ENCODE measurements at regions of chr20 and their contacts with region 1.

Region 1: DNA sequence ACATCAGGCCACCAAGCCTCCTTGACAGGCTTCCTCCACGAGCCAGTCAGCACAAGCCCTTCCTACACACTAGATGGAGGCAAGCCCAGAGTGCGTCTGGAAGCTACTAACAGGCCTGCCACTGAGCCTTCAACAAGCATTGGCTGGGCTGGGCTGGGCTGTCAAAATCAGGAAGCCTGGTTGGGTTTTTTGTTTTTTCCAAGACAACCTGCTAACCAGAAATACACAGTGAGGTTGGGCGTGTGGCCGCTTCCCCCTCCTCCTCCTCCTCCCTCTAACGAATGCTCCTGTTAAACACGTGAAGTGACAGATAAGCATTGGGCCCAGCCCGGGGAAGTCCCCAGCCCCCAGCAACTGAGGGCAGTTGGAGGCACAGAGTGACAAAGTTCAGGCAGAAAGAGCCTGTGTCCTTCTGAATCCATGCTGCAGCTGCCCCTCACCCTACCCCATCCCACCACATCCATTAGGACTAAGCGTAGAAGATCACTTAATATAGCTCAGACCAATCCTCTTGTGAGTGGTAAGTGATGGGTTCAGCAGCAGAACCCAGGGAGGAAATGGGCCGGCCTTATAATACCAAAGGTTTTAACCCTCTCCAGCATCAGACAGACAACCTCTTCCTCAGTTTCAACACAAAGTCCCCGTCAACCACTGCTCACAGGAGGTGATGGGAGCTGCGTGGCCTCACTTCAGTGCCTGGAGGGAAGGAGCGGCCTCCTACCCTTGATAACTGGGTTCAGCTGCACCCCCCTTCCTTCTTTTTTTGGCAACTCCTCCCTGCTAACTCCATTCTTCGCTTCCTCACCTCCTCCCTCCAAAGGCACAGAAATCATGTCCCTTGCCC is 1.1 kb downstream of the NFATC2 start:
- DNase-seq: peak; percentile 54
- ATAC-seq: peak; percentile 63
- H3K4me3 Mint-ChIP-seq: peak overlapping the region; percentile 98
- H3K27ac Mint-ChIP-seq: peak overlapping the region; percentile 98
- H3K4me1 Mint-ChIP-seq: peaks cover 55% of the 10 kb centered on the region
- H3K27me3 Mint-ChIP-seq: no peaks in the 10 kb centered on the region
- CTCF ChIP-seq: no peak

Region 2: DNA sequence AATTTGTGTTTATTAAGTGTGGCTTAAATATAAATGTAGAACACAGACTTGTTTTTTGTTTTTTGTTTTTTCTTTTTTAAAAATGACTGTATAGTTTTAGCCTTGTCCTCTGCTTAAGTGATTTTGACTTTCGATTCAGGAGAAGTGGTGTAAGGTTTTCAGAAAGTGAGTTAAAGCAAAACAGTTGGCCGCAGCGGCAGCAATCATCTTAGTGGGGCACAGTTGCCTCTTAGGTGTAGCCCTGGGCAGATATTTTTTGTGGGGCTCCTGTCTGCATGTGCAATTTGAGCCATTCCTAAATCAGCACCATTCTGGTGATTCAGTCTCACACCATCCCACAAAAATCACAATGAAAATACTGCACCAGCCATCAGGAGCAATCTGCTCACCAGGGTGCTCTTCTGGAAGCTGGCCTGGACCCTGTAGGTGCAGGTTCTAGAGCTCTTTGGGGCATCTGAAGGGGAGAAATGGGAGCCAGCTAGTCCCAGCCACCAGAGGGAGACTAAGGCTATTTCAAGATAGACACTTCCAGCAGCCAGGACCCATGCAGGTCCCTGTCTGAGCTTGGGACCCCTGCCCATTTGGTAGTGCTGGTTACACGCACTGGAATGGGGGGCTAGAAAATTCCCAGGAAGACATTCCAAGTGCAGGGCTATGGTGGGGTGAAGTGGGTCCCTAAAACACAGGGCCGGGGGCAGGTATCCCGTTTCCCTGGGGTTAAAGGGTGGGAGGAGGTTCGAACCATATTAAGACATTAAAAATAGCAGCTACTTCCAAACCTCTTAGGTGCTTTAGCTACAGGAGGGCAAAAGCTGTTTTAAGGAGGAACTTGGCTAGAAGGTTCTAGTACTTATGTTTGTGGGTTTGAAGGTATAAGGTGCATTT is 155.5 kb before region 1 on chr20:
- CTCF ChIA-PET with region 1: interaction called, 25 read pairs
- POLR2A ChIA-PET with region 1: interaction called, 16 read pairs
- intact Hi-C with region 1: loop called (anchors 1 kb)
- DNase-seq: no peak
- ATAC-seq: peak; percentile 65
- H3K4me3 Mint-ChIP-seq: no peak overlapping the region
- H3K27ac Mint-ChIP-seq: peak overlapping the region; percentile 62
- H3K4me1 Mint-ChIP-seq: peaks cover 42% of the 10 kb centered on the region
- H3K27me3 Mint-ChIP-seq: no peaks in the 10 kb centered on the region
- CTCF ChIP-seq: no peak

Region 3: GRCh38 chr20:51412991-51413481 is 128.4 kb before region 1 on chr20:
- CTCF ChIA-PET with region 1: interaction called, 5 read pairs
- POLR2A ChIA-PET with region 1: interaction called, 12 read pairs
- intact Hi-C with region 1: no loop called
- DNase-seq: no peak
- ATAC-seq: no peak
- H3K4me3 Mint-ChIP-seq: no peak overlapping the region
- H3K27ac Mint-ChIP-seq: peak overlapping the region; percentile 61
- H3K4me1 Mint-ChIP-seq: peaks cover 78% of the 10 kb centered on the region
- H3K27me3 Mint-ChIP-seq: no peaks in the 10 kb centered on the region
- CTCF ChIP-seq: no peak

Region 4: DNA sequence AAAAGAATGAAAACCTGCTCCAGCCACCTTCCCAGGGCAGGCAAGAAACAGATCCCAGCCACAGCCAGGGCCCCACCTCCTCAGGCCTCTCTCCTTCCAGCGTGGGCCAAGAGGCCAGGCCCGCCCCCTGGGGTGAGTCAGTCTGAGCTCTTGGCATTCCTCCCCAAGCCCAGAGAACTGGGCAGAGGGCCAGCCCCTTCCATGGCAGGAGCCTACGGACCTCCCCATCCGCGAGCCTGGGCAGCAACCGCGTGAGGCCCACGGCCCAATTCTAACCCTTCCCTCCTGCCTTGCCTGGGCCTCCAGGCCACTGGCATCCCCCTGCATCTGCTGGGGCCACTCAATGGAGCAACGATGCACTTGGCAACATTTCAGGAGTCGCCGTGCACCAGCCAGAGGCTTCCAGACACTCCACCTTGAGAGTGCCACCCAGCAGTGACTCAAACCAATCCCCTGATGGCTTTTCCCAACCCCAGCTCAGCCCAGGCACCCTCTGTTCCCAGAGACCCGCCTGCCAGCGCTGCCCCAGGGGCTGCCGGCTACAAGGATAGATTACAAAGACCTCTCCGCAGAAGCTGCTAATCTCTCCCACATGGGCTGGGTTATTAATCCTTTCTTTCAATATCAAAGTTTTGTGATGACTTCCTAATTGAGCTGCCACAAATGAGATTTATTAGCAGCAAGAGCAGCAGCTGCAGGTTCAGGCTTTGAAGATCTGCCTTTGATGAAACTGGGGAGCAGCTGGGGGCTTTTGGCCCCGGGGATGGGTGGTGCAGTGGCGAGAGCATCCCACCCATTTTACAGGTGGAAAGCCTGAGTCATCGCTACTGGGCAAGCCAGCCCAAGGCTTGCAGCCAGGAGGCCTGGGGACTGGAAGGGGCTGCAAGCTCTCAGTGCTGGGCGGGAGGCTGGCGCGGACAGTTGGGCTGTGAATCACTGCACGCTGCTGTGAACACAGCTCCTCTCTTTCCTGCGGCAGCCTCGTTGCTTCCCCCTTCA is 84.6 kb before region 1 on chr20:
- CTCF ChIA-PET with region 1: interaction called, 11 read pairs
- POLR2A ChIA-PET with region 1: interaction called, 38 read pairs
- intact Hi-C with region 1: loop called (anchors 1 kb)
- DNase-seq: peak; percentile 36
- ATAC-seq: peak; percentile 43
- H3K4me3 Mint-ChIP-seq: peak overlapping the region; percentile 59
- H3K27ac Mint-ChIP-seq: peak overlapping the region; percentile 79
- H3K4me1 Mint-ChIP-seq: peaks cover 64% of the 10 kb centered on the region
- H3K27me3 Mint-ChIP-seq: no peaks in the 10 kb centered on the region
- CTCF ChIP-seq: no peak

Region 5: GRCh38 chr20:51525241-51526129 is 15.9 kb before region 1 on chr20:
- CTCF ChIA-PET with region 1: interaction called, 5 read pairs
- POLR2A ChIA-PET with region 1: interaction called, 35 read pairs
- intact Hi-C with region 1: loop called (anchors 1 kb)
- DNase-seq: peak; percentile 31
- ATAC-seq: peak; percentile 53
- H3K4me3 Mint-ChIP-seq: peak overlapping the region; percentile 58
- H3K27ac Mint-ChIP-seq: peak overlapping the region; percentile 82
- H3K4me1 Mint-ChIP-seq: peaks cover 77% of the 10 kb centered on the region
- H3K27me3 Mint-ChIP-seq: no peaks in the 10 kb centered on the region
- CTCF ChIP-seq: no peak

Region 6: GRCh38 chr20:51562332-51563155 is 21.1 kb after region 1 on chr20:
- CTCF ChIA-PET with region 1: no interaction called
- POLR2A ChIA-PET with region 1: interaction called, 5 read pairs
- intact Hi-C with region 1: loop called (anchors 2 kb)
- DNase-seq: peak; percentile 28
- ATAC-seq: peak; percentile 25
- H3K4me3 Mint-ChIP-seq: peak overlapping the region; percentile 67
- H3K27ac Mint-ChIP-seq: no peak overlapping the region
- H3K4me1 Mint-ChIP-seq: peaks cover 26% of the 10 kb centered on the region
- H3K27me3 Mint-ChIP-seq: peaks cover 56% of the 10 kb centered on the region
- CTCF ChIP-seq: no peak

Region 7: DNA sequence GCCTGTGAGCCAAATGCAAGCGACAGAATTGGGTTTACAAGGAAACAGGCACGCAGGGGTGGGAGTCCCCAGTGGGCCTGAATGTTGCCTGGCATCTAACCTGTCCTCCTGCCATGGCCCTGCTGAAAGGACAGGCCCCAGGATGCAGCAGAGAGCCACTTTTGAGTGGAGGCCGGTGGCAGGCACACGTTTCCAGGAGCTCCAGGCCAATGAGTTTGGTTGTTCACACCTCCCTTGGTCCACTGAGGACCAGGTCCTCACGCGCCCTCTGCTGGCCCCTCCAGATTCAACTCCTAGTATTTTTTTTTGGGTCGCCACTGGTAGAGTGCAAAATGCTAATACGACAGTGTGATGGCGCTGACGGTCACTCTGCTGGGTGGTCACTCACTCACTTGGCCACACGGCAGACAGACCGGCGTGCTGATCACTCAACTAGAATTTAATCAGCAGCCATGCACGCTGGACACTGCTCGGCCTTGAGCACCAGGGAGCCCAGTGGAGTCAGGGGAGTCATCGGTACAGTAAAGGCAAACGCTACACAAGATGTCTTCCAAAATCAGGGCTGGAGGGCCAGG is 82.8 kb after region 1 on chr20:
- CTCF ChIA-PET with region 1: no interaction called
- POLR2A ChIA-PET with region 1: no interaction called
- intact Hi-C with region 1: no loop called
- DNase-seq: peak; percentile 55
- ATAC-seq: peak; percentile 64
- H3K4me3 Mint-ChIP-seq: no peak overlapping the region
- H3K27ac Mint-ChIP-seq: no peak overlapping the region
- H3K4me1 Mint-ChIP-seq: peaks cover 2% of the 10 kb centered on the region
- H3K27me3 Mint-ChIP-seq: peaks cover 18% of the 10 kb centered on the region
- CTCF ChIP-seq: no peak

Region 8: DNA sequence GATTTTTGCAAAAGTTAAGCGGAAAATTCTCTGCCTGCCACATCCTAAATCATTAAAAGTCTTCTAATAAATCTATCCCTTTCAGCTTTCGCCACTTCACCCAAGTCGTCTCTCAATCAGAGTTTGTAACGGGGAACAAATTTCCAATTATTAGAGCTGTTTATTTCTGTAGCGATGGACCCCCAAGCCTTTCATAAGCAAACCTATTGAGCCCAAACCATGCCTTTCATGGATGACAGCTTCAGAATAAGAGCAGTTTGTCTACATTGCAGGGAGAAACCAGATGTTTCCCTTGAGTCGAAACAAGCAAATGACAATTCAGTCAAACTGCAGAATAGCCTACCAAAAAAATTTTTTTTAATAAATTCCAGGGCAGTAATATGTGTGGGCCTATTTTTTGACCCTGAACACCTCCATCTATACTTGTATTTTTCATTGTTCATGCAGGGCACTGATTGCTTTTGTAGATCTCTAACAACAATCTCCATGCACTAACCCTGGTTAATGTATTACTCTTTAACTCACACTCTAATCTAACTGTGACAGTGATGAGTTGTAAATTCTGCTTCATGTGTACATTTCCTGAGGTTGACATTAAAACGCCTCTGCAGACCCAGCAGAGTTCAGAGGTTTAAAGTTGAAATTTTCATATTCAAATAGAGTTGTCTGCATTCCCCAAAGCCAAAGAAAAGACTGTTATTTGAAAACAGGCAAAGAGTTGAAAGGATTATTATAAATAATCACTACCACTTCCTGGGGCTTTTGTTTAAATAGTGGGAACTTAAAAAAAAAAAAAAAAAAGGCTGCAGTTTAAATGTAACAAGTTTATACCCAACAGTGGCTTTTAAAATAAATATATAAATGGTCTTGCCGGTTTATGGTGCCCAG is 162.2 kb after region 1 on chr20:
- CTCF ChIA-PET with region 1: no interaction called
- POLR2A ChIA-PET with region 1: no interaction called
- intact Hi-C with region 1: no loop called
- DNase-seq: no peak
- ATAC-seq: no peak
- H3K4me3 Mint-ChIP-seq: no peak overlapping the region
- H3K27ac Mint-ChIP-seq: no peak overlapping the region
- H3K4me1 Mint-ChIP-seq: no peaks in the 10 kb centered on the region
- H3K27me3 Mint-ChIP-seq: peaks cover 13% of the 10 kb centered on the region
- CTCF ChIP-seq: no peak

Measured in activated B cell treated with CpG ODN at 0.5 μM for 24 hours (primary cell).